ENCODE measurements at regions of chr10 and their contacts with region 1.

Region 1: GRCh38 chr10:43204943-43205671 is 61.8 kb downstream of the RASGEF1A start:
- DNase-seq: peak; percentile 73
- H3K4me3 Mint-ChIP-seq: no peak overlapping the region
- H3K27ac Mint-ChIP-seq: no peak overlapping the region
- H3K4me1 Mint-ChIP-seq: peaks cover 4% of the 10 kb centered on the region
- H3K27me3 Mint-ChIP-seq: no peaks in the 10 kb centered on the region

Region 2: DNA sequence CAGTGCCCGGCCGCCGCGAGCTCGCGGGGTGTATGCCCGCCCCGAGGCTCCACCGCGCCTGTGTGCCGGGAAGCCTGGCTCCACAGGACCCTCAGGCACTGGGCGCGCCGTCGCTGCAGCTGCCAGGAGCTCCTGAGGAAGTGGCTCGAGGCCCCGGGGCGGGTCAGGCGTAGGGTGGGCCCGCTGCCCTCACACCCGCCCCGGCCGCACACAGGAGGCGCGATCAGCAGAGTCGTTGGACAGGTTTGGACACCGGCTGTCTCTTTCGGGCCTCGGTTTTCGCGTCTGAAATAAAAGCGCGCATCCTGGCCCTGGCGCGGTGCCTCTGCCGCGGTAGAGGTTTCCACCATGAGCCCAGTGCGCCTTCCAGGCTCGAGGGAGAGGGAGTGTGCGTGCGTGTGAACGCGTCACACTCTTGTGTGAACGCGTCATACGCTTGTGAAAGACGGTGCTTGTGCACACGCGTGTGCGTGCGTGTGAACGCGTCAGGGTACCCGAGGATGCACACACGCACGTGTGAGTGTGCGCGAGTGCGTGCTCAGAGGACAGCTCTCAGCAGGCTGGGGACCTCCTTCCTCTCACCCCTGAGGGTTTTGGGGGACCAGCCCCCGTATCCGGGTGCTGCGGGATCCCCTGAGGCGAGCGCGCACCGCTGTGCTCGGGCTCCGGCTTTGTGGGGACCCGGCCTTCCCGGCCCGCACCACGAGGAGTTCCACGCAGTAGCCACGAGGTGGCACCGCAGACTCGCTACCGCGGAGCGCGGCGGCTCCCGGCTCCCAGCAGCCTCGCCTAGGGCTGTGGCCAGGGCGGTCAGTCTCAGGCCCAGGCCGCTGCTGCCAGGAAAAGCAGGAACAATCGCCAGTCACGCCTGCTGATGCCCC is 338.8 kb before region 1 on chr10:
- CTCF ChIA-PET with region 1: interaction called, 4 read pairs
- intact Hi-C with region 1: loop called (anchors 2 kb)
- DNase-seq: peak; percentile 65
- H3K4me3 Mint-ChIP-seq: peak overlapping the region; percentile 23
- H3K27ac Mint-ChIP-seq: no peak overlapping the region
- H3K4me1 Mint-ChIP-seq: no peaks in the 10 kb centered on the region
- H3K27me3 Mint-ChIP-seq: peaks cover 27% of the 10 kb centered on the region

Region 3: GRCh38 chr10:43105102-43105785 is 99.9 kb before region 1 on chr10:
- CTCF ChIA-PET with region 1: no interaction called
- intact Hi-C with region 1: loop called (anchors 1 kb)
- DNase-seq: peak; percentile 74
- H3K4me3 Mint-ChIP-seq: peak overlapping the region; percentile 63
- H3K27ac Mint-ChIP-seq: no peak overlapping the region
- H3K4me1 Mint-ChIP-seq: peaks cover 4% of the 10 kb centered on the region
- H3K27me3 Mint-ChIP-seq: peaks cover 13% of the 10 kb centered on the region

Region 4: DNA sequence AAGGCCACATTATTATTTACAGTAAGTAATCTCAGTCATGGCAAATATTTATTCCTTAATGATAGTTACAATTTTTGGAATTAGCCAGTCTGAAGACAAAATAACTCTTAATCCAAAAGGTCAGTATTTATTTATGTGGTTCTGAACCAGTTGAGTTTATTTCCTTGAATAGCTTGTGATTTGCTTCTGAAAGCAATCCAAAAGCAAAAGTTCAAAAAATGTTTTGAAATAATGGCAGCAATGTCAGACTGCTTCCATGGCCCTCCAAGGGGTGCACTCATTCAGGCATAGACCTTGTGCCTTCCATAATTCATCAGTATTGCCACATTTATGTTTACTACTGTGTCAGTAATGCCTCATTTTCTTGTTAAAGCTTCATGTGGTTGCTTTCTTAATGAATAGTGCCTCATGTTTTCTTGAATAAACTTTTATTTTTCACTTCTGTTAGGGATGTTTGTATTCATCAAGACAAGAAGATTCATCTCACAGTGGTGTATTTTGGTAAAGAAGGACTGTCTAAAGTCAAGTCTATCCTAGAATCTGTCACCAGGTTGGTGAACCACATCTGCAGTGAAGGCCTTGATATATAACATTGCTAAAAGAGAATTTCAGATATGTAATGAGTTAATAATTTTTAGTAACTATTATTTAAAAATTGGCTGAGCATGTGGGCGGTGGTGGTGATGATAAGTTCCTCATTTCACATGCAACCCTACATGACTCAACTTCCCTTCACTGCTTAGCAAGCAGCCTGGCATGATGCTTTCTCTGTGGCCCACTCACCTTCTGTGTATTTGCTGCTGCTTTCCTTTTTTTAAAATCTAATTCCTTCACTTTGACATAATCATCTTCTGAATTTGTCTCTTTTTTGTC is 44.8 kb before region 1 on chr10:
- CTCF ChIA-PET with region 1: interaction called, 3 read pairs
- intact Hi-C with region 1: loop called (anchors 1 kb)
- DNase-seq: peak; percentile 57
- H3K4me3 Mint-ChIP-seq: no peak overlapping the region
- H3K27ac Mint-ChIP-seq: peak overlapping the region; percentile 79
- H3K4me1 Mint-ChIP-seq: peaks cover 49% of the 10 kb centered on the region
- H3K27me3 Mint-ChIP-seq: no peaks in the 10 kb centered on the region

Region 5: DNA sequence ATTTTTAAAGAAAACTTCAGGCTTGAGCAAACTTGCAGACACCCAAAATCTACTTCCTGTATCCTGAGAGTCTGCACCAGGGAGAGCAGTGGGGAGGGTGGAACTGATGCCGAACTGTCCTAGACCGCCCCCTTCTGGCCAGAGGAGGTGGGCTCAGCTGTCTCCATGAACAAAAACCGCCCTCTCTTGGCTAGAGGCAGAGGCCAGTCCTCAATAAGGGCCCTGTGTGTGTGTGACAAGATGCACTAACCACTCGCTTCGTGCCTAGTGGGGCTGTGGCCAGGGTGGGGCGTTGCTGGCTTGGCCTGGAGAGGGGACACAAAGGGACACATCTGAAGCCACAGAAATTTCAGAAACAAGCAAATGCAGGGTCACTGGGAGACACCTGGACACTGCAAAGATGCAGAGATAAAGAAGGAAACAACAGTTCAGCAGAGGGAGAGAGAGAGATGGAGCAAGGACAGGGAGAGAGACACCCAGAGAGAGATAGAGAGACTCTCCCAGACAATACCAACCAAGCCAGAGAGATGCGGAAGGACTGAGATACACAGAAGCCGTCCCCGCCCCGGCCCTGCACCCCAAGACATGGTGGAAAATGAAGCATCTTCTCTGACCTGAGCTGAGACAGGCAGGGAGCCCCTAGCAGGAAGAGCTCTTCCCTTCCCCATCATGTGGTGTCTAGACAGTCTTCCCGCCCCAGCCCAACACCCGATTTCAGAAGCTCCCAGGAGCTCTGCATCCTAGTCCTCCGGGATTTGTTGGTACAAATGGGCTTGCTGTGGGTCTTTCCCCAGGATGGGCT is 143.6 kb after region 1 on chr10:
- CTCF ChIA-PET with region 1: interaction called, 11 read pairs
- intact Hi-C with region 1: loop called (anchors 1 kb)
- DNase-seq: peak; percentile 93
- H3K4me3 Mint-ChIP-seq: no peak overlapping the region
- H3K27ac Mint-ChIP-seq: no peak overlapping the region
- H3K4me1 Mint-ChIP-seq: peaks cover 16% of the 10 kb centered on the region
- H3K27me3 Mint-ChIP-seq: peaks cover 19% of the 10 kb centered on the region